K562 (cell line): ENCODE measurements at regions of chr11 and their contacts with region 1.

Region 1: GRCh38 chr11:74449369-74449931 is 17.9 kb downstream of the KCNE3 start:
- DNase-seq: peak; percentile 50 to 81 (median 58)
- ATAC-seq: peak; percentile 92
- H3K4me3 ChIP-seq: no peak overlapping the region
- H3K27ac ChIP-seq: no peak overlapping the region
- H3K4me1 ChIP-seq: no peaks in the 10 kb centered on the region; a peak in 2 of 5 replicates
- H3K27me3 ChIP-seq: no peaks in the 10 kb centered on the region; a peak in 3 of 5 replicates
- CTCF ChIP-seq: peak; percentile 75 to 93 (median 85)
- EP300 ChIP-seq: no peak
- POLR2A ChIP-seq: no peak
- RAD21 ChIP-seq: peak; percentile 86 to 94

Region 2: DNA sequence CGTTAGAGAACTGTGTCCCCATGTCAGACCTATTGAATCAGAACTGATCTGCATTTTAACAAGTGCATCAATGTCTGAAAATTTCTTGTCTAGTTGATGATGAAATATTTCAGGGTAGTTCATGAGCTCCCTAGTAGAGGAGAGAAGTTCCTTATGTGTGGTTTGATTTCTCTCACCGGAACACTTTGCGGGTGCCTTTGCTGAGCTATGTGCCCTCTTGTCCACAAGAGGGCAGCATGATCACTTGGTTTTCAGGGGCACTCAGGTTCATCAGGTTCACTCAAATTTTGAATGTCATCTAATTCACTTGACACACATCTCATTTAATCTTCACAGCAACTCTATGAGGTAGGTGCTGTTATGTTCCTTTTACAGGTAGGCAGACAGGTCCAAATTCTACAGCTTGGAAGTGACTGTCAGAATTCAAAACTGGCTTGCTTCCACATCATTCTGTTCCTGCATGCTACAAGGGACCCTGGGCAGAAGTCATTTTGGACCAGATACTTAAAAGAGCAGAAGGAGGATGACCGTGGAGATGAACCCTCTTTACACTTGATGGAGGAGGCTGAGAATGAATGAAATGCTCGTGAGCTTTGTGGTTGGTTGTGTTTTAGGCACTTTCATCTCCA is 193.6 kb before region 1 on chr11:
- CTCF ChIA-PET with region 1: interaction called, 15 read pairs
- POLR2A ChIA-PET with region 1: interaction called, 3 read pairs
- in situ Hi-C with region 1: loop called (anchors 5 kb)
- intact Hi-C with region 1: loop called (anchors 1 kb)
- DNase-seq: peak; percentile 72 to 77 (median 76)
- ATAC-seq: peak; percentile 89
- H3K4me3 ChIP-seq: no peak overlapping the region
- H3K27ac ChIP-seq: no peak overlapping the region
- H3K4me1 ChIP-seq: no peaks in the 10 kb centered on the region
- H3K27me3 ChIP-seq: peaks cover 2 to 3% of the 10 kb centered on the region in 2 experiments; a peak in 2 of 5 replicates
- CTCF ChIP-seq: peak; percentile 84 to 91 (median 85)
- EP300 ChIP-seq: no peak
- POLR2A ChIP-seq: no peak
- RAD21 ChIP-seq: peak; percentile 79 to 86

Region 3: DNA sequence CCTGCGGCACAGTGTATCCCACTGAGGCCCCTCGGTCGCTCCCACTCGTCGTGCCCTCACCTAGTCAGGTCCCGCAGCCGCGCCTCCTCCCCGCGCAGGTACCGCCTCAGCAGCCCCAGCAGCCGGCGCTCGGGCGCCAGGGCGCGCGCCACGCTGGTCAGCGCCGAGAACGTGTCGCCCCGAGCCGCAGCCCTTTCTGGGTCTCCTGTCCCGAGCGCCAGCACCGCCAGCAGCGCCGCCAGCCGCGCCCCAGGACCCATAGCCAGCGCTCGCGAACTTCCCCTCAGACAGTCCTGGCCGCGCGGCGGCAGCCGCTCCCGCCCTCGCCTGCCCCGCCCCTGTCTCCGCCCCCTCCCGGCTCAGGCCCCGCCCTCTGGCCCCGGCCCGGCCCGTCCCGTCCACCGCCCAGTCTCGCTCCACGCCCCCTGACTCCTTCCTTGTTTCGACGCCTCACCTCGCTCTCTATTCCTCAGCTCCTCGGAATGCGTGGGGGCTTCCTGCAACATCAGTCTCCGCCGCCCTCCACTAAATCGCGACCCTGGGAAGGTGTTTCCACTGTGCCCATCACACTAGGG is 138.0 kb before region 1 on chr11 and contains the start of gene P4HA3:
- CTCF ChIA-PET with region 1: no interaction called
- POLR2A ChIA-PET with region 1: no interaction called
- in situ Hi-C with region 1: no loop called
- intact Hi-C with region 1: no loop called
- DNase-seq: peak; percentile 70 to 93 (median 89)
- ATAC-seq: peak; percentile 100
- H3K4me3 ChIP-seq: peak within 1 kb of the TSS; percentile 43
- H3K27ac ChIP-seq: no peak within 1 kb of the TSS
- H3K4me1 ChIP-seq: peaks cover 0 to 10% of the 10 kb centered on the region in 2 experiments; a peak in 3 of 5 replicates
- H3K27me3 ChIP-seq: peaks cover 4 to 7% of the 10 kb centered on the region in 2 experiments; a peak in 4 of 5 replicates
- CTCF ChIP-seq: peak in 2 of 3 experiments; percentile 18 to 56; a peak in 3 of 6 replicates
- EP300 ChIP-seq: no peak
- POLR2A ChIP-seq: no peak
- RAD21 ChIP-seq: peak in 1 of 2 experiments; percentile 26; a peak in 1 of 4 replicates
- polyA plus RNA-seq, gene P4HA3: 0.01 TPM in 1 of 2 experiments, not detected in the other

Region 4: DNA sequence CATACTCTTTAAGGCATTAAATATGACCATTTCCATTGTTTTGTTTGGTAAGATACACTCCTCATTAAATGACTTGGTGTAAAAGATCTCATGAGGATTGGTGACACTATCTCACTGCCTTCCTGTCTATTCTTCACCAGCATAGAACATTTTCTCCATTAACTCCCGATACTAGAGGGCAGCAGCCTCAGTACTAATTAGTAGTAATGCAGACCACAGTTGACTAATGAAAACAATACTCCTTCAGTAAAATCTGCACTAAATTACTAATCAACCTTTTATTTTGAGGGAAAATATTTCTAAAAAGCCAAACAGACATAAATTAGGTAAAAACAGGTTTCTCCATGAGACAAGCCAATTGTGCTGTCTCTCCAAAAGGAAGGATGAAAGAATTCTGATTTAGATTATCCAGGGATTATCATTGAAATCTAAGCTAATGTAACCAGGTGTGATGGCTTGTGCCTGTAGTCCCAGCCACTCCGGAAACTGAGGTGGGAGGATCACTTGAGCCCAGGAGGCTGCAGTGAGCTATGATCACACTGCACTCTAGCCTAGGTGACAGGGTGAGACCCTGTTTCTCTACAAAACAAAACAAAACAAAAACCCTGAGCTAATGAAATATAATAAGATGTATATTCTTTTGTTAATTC is 60.6 kb before region 1 on chr11:
- CTCF ChIA-PET with region 1: interaction called, 13 read pairs
- POLR2A ChIA-PET with region 1: interaction called, 3 read pairs
- in situ Hi-C with region 1: no loop called
- intact Hi-C with region 1: loop called (anchors 1 kb)
- DNase-seq: peak; percentile 31 to 72 (median 36)
- ATAC-seq: peak; percentile 89
- H3K4me3 ChIP-seq: no peak overlapping the region
- H3K27ac ChIP-seq: no peak overlapping the region
- H3K4me1 ChIP-seq: no peaks in the 10 kb centered on the region; a peak in 1 of 5 replicates
- H3K27me3 ChIP-seq: no peaks in the 10 kb centered on the region; a peak in 1 of 5 replicates
- CTCF ChIP-seq: peak; percentile 65 to 81 (median 65); a peak in 5 of 6 replicates
- EP300 ChIP-seq: no peak
- POLR2A ChIP-seq: no peak
- RAD21 ChIP-seq: peak; percentile 75 to 87

Region 5: DNA sequence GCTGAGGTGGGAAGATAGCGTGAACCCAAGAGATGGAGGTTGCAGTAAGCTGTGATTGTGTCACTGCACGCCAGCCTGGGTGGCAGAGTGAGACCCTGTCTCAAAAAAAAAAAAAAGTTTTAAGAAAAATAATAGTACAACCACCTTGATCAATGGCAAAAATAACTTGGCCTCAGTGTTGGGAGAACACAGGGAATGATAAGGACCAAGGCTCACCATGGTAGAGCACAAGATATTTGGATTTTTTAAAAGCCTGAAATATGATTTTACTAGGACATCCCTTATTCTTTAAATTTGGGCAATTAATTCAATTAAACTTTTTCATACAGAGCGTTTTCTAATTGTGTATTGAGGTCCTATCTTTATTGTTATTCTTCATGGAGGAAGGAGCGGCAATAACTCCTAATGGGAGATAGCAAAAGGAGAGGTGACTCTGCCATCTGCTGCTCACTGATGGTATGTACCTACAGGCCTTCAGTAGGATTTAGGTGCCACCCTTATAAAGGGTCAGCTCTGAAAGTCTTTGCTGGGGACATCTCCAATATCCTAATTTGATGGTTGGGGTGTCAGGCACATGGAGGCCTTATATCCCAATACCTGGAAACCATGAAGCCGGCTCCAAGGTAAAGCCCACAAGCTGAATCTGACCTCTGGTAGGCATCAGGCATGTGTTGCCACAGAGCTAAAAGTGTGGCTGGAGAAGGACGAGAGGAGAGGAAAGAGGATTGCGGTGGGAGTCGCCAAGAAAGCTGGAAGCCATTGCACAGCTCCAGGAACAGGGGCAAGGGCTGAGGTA is 121.0 kb after region 1 on chr11:
- CTCF ChIA-PET with region 1: interaction called, 43 read pairs
- POLR2A ChIA-PET with region 1: interaction called, 6 read pairs
- in situ Hi-C with region 1: no loop called
- intact Hi-C with region 1: loop called (anchors 1 kb)
- DNase-seq: peak; percentile 67 to 74 (median 70)
- ATAC-seq: peak; percentile 96
- H3K4me3 ChIP-seq: no peak overlapping the region
- H3K27ac ChIP-seq: no peak overlapping the region
- H3K4me1 ChIP-seq: no peaks in the 10 kb centered on the region
- H3K27me3 ChIP-seq: peaks cover 12 to 13% of the 10 kb centered on the region in 2 experiments; a peak in 4 of 5 replicates
- CTCF ChIP-seq: peak; percentile 75 to 91 (median 81)
- EP300 ChIP-seq: no peak
- POLR2A ChIP-seq: no peak
- RAD21 ChIP-seq: peak; percentile 95 to 98